Activated CD8-positive, alpha-beta memory T cell treated with anti-CD3 and anti-CD28 coated beads, Interleukin-2, amount 10 ng/mL, durations not matched to agents 7 days and 5 days (primary cell): ENCODE measurements at regions of chr1 and their contacts with region 1.

Region 1: GRCh38 chr1:209565759-209566678 is 17.5 kb upstream of the CAMK1G start:
- DNase-seq: peak; percentile 85
- ATAC-seq: peak; percentile 89
- H3K4me3 Mint-ChIP-seq: no peak overlapping the region
- H3K27ac Mint-ChIP-seq: no peak overlapping the region
- H3K4me1 Mint-ChIP-seq: peaks cover 9% of the 10 kb centered on the region
- H3K27me3 Mint-ChIP-seq: peaks cover 38% of the 10 kb centered on the region

Region 2: GRCh38 chr1:209627732-209628196 is 61.7 kb after region 1 on chr1:
- CTCF ChIA-PET with region 1: interaction called, 16 read pairs
- DNase-seq: peak; percentile 84
- ATAC-seq: peak; percentile 88
- H3K4me3 Mint-ChIP-seq: no peak overlapping the region
- H3K27ac Mint-ChIP-seq: no peak overlapping the region
- H3K4me1 Mint-ChIP-seq: peaks cover 2% of the 10 kb centered on the region
- H3K27me3 Mint-ChIP-seq: no peaks in the 10 kb centered on the region